ENCODE measurements at regions of chr14 and their contacts with region 1.

Region 1: DNA sequence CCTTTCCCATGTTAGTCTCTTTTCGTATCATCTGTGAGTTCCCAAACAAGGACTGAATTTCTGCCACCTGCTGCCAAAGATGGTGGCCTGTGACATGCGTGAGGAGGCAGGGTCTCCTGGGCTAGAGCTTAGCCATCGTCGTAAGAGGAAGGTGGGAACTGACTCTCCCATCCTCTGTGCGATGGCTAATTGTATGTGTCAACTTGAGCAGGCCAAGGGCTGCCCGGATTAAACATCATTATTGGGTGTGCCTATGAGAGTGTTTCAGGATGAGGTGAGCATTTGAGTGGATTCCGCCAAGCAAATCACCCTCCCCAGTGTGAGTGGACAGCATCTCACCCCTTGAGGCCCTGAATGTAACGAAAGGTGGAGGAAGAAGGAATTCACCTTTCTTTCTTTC is 220.7 kb upstream of the DIO3 start:
- DNase-seq: no peak
- H3K4me3 ChIP-seq: no peak overlapping the region
- H3K27ac ChIP-seq: no peak overlapping the region
- H3K4me1 ChIP-seq: peaks cover 0 to 2% (median 0%) of the 10 kb centered on the region in 4 experiments; a peak in 1 of 7 replicates
- H3K27me3 ChIP-seq: peaks cover 0 to 1% (median 0%) of the 10 kb centered on the region in 4 experiments; a peak in 1 of 7 replicates
- CTCF ChIP-seq: no peak
- EP300 ChIP-seq: no peak
- POLR2A ChIP-seq: no peak
- RAD21 ChIP-seq: no peak

Region 2: GRCh38 chr14:101350691-101351090 is 10.1 kb after region 1 on chr14:
- CTCF ChIA-PET with region 1: interaction called, 12 read pairs
- POLR2A ChIA-PET with region 1: no interaction called
- DNase-seq: no peak
- H3K4me3 ChIP-seq: no peak overlapping the region
- H3K27ac ChIP-seq: no peak overlapping the region
- H3K4me1 ChIP-seq: no peaks in the 10 kb centered on the region
- H3K27me3 ChIP-seq: no peaks in the 10 kb centered on the region
- CTCF ChIP-seq: peak in 2 of 3 experiments; percentile 5 to 31; a peak in 2 of 4 replicates
- EP300 ChIP-seq: no peak
- POLR2A ChIP-seq: no peak
- RAD21 ChIP-seq: peak in 1 of 2 experiments; percentile 7; a peak in 1 of 4 replicates